Right ventricle myocardium superior (tissue), 1 donor: ENCODE measurements at regions of chrX and their contacts with region 1.

Region 1: GRCh38 chrX:109475174-109475891 is 6.6 kb downstream of the GUCY2F start:
- DNase-seq: no peak
- ATAC-seq: peak; percentile 77

Region 2: GRCh38 chrX:108699368-108699767 is 776.0 kb before region 1 on chrX:
- intact Hi-C with region 1: loop called (anchors 10 kb)
- DNase-seq: no peak
- ATAC-seq: peak; percentile 55

Region 3: DNA sequence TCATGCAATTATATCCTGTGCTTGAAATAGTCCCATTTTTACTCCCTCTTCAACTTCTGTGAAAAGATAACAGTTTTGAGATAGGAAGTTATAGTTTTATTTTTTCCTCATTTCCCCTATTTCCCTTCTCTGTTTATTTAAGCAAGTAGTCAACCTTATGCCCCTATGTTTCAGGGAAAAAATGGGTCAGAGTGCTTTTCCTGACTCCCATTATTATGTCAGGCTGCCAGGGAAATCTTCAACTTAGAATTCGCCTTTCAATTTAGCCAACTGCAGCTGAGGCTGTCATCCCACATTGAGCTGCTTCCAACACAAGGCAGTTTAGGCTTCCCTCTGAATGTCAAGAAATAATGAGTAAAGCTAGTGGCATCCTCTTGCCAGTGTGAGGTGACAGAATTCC is 103.6 kb after region 1 on chrX:
- intact Hi-C with region 1: no loop called
- DNase-seq: no peak
- ATAC-seq: no peak